Cardiac septum (tissue), 1 donor: ENCODE measurements at regions of chr14 and their contacts with region 1.

Region 1: DNA sequence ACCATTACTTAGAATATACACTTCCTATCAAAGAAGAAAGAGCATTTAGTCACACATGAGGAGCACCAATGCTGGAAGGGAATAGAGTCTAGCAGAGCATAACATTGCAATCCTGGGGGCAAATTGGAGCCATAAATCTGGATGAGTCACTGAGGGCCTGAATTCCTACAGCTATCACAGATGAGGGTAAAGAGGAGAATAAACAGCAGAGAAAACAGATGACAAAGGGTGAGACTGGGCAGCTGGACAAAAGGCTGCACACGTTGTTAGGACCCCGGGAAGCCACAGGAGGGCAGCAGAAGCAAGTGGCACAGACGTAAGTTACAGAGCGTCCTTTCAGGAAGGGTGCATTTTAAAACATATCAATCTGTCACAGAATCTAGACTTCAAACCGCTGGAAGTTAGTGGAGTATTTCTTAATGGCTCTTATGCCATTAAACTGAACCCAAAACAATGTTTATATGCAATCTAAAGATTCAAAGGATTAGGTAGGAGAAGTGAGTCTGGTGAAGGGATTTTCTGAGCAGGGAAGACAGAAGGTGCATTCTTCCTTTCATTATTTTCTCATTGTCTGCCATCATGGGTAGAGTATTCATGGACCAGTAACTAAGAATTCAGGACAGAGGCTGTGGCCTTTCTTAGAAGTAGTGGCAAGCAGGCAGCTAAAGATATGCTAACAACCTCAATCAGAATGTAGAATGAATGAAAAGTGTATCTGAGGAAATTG is 159.8 kb upstream of the DAAM1 start:
- DNase-seq: no peak

Region 2: DNA sequence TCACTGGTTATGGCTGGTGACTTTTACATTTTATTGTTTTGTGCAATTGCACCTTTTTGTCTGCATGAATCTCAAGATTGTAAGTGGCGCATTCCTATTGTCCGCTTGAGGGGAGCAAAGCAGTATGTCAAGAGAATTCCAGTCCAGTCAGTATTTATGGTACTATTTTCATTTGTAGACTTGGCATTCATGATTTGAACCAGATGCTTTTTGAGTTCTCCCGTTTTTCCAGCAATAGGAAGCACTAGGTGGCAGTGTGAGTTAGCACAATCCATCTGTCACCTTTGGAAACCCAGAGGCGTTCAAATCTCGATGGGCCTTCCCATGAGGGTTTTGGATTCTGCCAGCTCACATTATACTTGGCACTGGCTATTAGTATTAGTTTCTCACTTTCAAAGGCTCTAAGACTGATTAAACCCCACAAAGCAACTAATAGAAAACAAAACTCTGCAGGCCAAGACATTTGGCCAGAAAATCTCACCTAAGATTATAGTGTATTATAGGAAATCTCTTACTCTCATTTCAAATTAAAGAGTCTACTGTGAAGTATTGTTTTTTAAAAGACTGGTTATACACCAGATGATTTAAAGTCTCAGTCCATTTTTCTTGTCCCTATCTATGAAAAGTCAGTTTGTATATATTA is 388.7 kb before region 1 on chr14:
- intact Hi-C with region 1: loop called (anchors 10 kb)
- DNase-seq: no peak

Region 3: GRCh38 chr14:58712357-58712756 is 316.3 kb before region 1 on chr14:
- intact Hi-C with region 1: no loop called
- DNase-seq: no peak

Region 4: DNA sequence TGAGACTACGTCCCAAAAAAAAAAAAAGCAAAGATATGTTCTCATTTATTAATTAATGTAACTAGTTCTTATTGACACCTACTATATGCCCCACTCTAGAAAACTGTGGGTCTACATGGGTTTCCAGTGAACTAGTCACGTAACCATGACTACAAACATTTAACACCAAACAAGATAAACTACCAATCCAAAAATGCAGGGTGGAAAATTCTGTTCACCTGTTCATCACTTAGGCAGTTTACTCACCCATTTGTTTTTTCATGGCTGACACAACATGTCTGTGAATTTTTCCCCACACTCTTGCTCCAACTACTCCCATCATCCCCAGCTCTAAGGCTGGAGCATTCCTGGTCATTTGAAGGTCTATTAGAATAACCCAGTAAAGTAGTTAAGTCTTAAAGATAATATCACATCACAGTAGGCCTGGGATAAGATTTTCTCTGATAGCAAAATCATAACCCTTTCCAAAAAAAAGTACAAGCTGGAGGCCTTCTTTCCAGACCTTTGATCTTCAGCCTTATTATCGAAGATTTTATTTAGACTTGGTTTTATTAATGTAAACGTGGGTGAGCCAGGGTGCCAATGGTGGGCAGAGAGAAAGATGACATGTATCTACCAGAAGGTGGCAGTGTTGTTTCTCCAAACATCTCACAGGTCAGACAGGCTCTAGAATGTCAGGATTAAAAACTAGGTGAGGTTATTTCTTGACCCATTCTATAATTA is 98.2 kb after region 1 on chr14:
- intact Hi-C with region 1: loop called (anchors 5 kb)
- DNase-seq: no peak

Region 5: GRCh38 chr14:59454131-59454530 is 425.5 kb after region 1 on chr14:
- intact Hi-C with region 1: loop called (anchors 10 kb)
- DNase-seq: no peak

Region 6: DNA sequence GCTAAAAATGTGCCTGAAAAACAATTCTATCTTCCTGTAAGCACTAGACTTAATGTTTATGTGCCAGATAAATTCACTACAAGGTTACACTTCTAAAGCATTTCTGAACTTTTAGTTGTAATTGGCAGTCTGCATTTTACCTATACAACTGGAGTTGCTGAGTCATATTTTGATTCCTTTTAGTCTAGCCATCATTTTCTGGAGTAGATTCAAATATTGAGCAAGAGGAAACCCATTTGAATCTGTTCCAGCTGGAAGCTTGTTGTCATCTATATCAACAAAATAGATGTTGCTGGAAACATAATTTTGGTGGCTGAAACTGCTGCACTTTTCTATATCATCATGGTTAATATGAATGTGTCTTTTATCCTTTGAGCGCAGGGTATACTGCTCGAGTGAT is 670.2 kb after region 1 on chr14:
- intact Hi-C with region 1: no loop called
- DNase-seq: no peak